ENCODE measurements at regions of chr11 and their contacts with region 1.

Region 1: DNA sequence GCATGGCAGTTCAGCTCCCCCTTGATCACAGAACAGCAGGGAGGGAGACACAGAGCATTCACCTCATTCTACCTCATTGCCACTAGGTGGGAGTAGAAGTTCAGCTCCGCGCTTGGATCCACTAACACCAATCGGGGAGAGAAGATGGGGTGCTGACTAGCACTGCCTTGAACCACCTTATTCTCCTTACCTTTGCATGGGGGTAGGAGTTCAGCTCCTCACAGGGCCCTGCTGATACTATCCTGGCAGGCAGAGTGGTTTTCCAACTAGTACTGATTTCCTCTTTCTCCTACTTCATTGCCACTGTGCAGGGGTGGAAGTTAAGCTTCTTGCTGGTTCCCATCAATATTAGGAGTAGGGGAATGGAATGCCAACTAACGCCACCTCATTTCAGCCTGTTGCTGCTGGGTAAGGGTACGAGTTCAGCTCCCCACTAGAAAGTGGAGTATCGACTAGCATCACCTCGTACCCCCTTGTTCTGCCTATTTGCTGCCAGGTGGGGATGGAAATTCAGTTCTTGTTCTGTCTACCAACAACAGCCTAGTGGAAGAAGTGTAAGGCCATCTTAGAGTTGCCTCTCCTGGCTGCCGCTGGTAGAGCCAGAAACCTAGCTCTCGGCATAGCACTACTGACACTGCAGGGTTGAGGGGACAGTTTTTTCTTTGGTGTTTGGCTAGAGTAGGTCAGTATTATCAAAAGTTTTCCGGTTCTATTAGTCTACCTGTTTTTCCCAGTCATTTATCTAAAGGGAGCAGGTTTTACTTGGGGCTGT is 550.9 kb upstream of the CCDC90B start:
- DNase-seq: peak; percentile 43 to 54
- H3K4me3 ChIP-seq: no peak overlapping the region
- H3K4me1 ChIP-seq: no peaks in the 10 kb centered on the region
- H3K27me3 ChIP-seq: peaks cover 3% of the 10 kb centered on the region; the same call in 1 of the 2 replicates

Region 2: DNA sequence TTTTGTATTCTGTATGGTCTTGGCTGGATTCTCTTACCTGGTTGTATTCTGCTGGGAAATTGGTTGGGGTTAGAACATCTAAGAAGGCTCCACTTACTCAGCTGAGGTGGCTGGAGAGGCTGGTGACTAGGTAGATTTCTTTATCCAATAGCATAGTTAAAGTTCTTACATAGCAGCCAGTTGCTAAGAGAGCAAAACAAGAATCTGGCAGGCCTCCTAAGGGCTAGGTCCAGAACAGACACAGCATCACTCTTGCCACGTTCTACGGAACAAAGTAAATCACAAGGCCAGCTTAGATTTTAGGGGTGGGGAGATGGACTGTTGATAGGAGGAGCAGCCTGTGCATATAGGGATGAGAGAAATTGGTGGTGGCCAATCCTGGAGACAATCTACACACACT is 409.6 kb before region 1 on chr11:
- in situ Hi-C with region 1: no loop called
- DNase-seq: no peak
- H3K4me3 ChIP-seq: no peak overlapping the region
- H3K4me1 ChIP-seq: no peaks in the 10 kb centered on the region
- H3K27me3 ChIP-seq: 0 out of 2 replicates have a peak, but pooled peaks cover 3% of the 10 kb centered on the region

Region 3: GRCh38 chr11:83502041-83502440 is 335.0 kb before region 1 on chr11:
- in situ Hi-C with region 1: no loop called
- DNase-seq: no peak
- H3K4me3 ChIP-seq: no peak overlapping the region
- H3K4me1 ChIP-seq: no peaks in the 10 kb centered on the region
- H3K27me3 ChIP-seq: peaks cover 6% of the 10 kb centered on the region; the same call in 1 of the 2 replicates

Region 4: DNA sequence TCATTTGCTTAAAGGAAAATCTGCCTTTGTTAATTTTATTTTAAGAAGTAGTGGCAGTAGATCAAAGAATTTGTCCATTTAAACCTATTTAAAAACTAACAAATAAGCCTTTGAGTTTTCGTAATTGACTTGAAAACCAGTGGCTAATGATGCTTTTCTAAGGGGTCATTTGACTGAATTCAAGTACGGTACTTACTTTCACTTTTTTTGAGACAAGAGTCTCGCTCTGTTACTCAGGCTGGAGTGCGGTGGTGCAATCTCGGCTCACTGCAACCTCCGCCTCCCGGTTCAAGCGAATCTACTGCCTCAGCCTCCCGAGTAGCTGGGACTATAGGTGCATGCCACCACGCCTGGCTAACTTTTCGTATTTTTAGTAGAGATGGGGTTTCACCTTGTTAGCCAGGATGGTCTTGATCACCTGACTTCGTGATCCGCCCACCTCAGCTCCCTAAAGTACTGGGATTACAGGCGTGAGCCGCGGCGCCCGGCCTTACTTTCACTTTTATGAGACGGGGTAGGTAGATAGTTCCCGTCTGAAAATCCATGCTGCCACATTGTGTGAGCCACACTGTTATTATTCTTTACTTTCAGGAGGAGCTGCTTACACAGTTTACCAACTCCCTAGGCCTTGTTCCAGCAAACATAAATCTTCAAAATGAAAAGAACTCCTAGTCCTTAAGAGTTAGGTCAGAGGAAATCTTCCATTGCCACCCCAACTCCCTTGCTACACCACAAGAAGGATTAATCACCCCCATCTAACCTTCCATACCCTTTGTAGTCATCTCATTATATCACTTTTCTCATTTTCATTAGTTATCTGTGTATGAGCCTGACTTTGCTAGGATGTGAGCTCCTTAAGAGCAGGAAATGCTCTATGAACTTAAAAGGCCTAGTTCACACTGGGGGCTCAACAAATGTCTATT is 375.7 kb after region 1 on chr11:
- in situ Hi-C with region 1: no loop called
- DNase-seq: no peak
- H3K4me3 ChIP-seq: no peak overlapping the region
- H3K4me1 ChIP-seq: no peaks in the 10 kb centered on the region
- H3K27me3 ChIP-seq: no peaks in the 10 kb centered on the region

Region 5: DNA sequence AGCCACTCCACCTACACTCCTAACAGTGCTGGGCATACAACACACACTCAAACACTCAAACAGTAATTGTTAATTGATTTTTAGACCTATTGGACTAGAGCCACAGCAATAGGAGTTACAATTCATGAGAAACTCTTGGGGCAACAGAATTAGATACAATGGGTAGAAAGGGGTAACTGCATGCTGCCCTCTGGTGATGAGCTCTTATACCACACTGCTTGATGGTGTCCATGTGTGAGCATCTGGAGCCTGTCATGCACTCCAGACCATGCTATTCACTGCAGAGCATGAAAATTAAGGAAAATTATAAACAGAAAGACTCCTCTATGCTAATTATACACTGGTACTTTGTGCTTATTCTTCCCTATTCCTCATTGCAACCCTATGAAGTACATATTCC is 424.6 kb after region 1 on chr11:
- in situ Hi-C with region 1: loop called (anchors 10 kb)
- DNase-seq: peak in 1 of 2 experiments; percentile 9
- H3K4me3 ChIP-seq: no peak overlapping the region
- H3K4me1 ChIP-seq: no peaks in the 10 kb centered on the region
- H3K27me3 ChIP-seq: peaks cover 9% of the 10 kb centered on the region

Region 6: DNA sequence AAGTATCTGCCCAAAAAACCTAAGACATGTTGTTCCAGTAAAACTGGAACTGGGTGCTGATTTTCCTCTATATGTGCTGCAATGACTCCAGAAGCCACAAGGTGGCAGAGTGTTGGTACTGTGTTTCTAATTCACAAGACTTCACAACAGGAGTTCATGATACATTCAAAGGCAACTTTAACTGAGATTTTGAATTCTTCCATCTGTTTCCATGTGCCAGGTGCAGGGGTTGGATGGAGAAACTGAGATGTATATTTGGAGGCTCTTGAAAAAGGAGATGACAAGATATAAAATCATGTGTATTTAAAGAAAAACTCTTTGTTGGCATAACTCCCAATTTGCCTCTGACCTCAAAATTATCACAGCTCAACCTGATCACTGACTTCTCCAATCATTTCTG is 547.7 kb after region 1 on chr11:
- in situ Hi-C with region 1: loop called (anchors 25 kb)
- DNase-seq: peak; percentile 54 to 68
- H3K4me3 ChIP-seq: no peak overlapping the region
- H3K4me1 ChIP-seq: no peaks in the 10 kb centered on the region; the same call in 1 of the 2 replicates
- H3K27me3 ChIP-seq: no peaks in the 10 kb centered on the region

Region 7: DNA sequence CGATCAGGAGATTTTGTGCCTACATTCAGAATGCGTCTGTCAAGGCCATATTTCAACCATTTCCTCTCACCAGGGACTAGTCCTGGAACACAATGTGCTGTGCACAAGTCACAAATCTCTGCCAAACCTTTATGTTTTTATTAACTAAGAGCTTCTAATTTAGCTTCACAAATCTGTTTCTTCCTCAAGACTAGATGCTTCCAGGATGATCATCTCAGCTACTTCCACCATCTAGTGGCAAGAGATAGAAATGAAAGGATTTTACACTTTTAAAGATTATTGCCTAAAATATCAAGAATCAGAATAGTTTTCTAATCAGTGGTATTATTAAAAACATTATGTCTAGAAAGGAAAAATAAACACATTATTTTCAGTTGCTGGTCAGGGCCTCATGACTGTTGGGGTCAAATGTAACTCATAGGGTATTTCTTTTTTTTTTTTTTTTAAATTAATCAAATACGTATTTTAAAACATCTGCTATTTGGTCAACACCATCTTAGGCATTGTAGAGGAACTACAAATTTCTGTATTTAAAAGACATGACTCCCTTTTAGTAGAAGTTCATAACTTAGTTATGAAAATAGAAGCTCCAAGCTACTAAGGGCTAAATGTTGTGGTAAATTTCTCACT is 687.5 kb after region 1 on chr11:
- in situ Hi-C with region 1: loop called (anchors 25 kb)
- DNase-seq: peak in 1 of 2 experiments; percentile 50
- H3K4me3 ChIP-seq: no peak overlapping the region
- H3K4me1 ChIP-seq: peaks cover 2% of the 10 kb centered on the region; the same call in 1 of the 2 replicates
- H3K27me3 ChIP-seq: no peaks in the 10 kb centered on the region

Region 8: DNA sequence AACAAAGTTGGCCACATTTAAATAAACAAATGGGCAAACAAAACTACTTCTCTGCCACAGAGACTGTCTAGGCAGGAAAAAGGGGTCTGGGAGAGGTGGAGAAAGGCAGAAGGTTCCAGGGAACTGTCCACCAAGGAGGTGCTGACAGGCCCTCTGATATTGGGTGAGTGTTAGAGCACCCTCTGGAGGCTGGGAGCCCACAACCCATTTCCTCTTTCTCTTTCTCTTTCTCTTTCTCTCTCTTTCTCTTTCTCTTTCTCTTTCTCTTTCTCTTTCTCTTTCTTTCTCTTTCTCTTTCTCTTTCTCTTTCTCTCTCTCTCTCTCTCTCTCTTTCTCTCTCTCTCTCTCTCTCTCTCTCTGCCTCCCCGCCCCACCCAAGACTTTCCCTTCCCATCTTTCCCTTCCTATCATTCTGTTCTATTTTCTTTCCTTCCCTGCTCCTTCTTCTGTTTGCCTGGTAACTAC is 877.3 kb after region 1 on chr11:
- in situ Hi-C with region 1: loop called (anchors 25 kb)
- DNase-seq: peak; percentile 63 to 87
- H3K4me3 ChIP-seq: no peak overlapping the region
- H3K4me1 ChIP-seq: no peaks in the 10 kb centered on the region
- H3K27me3 ChIP-seq: no peaks in the 10 kb centered on the region

Measured in HAP-1 (cell line).